ENCODE measurements at regions of chr11 and their contacts with region 1.

Region 1: DNA sequence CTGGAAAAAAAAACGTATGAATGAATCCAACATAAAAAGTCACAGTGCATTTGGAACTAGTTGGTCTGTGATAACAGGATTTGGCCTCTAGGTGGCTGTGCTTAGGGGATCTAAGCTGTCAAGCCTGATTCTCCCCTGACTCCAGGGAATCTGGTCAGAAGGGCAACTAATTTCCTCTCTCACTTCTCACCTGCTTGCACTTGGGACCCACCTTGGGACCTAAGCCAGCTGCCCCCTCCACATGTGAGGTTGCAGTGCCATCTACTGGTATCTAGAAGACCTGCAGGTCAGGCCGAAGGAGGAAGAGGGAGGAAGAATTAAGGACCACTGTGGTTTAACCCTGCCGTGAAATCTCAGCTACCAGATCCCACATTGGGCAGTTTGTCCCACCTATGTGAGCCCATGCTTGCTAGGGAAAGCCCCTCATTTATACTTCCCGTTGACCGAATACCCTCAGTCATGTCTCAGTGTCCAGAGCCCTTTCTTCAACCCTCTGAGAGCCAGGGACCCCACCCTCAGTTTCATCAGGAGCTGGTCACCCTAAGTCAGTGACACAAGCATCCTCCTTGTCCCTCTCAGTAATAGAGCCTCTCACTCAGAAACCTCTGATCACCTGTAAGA is 33.2 kb upstream of the CAVIN3 start:
- DNase-seq: peak; percentile 71
- H3K4me3 Mint-ChIP-seq: no peak overlapping the region
- H3K27ac Mint-ChIP-seq: no peak overlapping the region
- H3K4me1 Mint-ChIP-seq: peaks cover 11% of the 10 kb centered on the region
- H3K27me3 Mint-ChIP-seq: no peaks in the 10 kb centered on the region
- CTCF ChIP-seq: peak; percentile 96

Region 2: DNA sequence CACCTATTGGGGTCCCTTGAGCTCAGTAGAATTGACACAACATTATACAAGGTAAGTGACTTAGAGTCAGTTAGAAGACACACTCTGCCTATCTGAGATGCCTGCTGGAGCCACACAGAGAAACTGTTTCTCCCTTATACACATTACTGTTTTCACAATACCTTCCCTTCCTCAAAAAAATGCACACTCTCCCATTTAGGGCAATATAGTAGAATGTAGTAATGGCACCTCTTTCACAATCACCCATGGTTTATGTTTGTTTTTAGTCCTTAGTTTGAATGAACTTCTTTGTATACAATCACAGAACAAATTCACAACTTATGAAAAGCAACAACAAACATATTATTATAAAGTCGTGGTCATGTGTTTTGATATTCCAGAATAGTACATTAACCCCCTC is 819.4 kb before region 1 on chr11:
- CTCF ChIA-PET with region 1: no interaction called
- POLR2A ChIA-PET with region 1: no interaction called
- intact Hi-C with region 1: no loop called
- DNase-seq: no peak
- H3K4me3 Mint-ChIP-seq: no peak overlapping the region
- H3K27ac Mint-ChIP-seq: no peak overlapping the region
- H3K4me1 Mint-ChIP-seq: peaks cover 6% of the 10 kb centered on the region
- H3K27me3 Mint-ChIP-seq: peaks cover 24% of the 10 kb centered on the region
- CTCF ChIP-seq: no peak

Region 3: DNA sequence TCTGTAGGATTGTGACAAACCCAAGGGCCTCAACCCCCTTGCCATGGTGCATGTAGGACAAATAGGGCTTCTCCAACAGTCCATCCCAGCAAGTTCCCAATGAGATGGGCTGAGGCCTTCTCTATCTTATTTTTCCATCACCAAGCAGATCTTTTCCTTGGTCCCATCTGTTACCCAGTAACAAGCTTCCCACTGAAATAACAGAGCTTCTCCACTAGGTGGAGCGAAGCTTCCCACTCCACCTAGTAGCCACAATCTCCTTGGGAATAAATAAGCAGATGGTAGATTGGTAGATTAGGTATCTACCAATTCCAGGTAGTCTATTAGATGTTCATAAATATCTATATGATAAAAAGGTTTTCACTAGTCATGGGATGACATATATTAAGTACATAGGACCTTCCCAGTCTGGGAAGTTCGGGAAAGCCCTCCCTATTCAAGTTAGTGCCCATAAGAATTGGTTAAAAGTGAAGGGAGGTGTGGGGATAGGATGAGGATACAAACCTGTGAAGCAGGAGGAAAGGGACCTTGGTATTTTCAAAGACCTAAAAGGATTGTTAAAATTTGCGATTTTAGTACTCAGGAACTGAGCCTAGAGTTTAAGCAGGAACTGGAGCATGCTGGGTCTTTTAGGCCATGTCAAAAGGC is 360.7 kb before region 1 on chr11:
- CTCF ChIA-PET with region 1: interaction called, 16 read pairs
- POLR2A ChIA-PET with region 1: no interaction called
- intact Hi-C with region 1: no loop called
- DNase-seq: peak; percentile 32
- H3K4me3 Mint-ChIP-seq: no peak overlapping the region
- H3K27ac Mint-ChIP-seq: no peak overlapping the region
- H3K4me1 Mint-ChIP-seq: no peaks in the 10 kb centered on the region
- H3K27me3 Mint-ChIP-seq: no peaks in the 10 kb centered on the region
- CTCF ChIP-seq: peak; percentile 31

Region 4: GRCh38 chr11:6022956-6023355 is 330.5 kb before region 1 on chr11:
- CTCF ChIA-PET with region 1: interaction called, 66 read pairs
- POLR2A ChIA-PET with region 1: no interaction called
- intact Hi-C with region 1: loop called (anchors 1 kb)
- DNase-seq: peak; percentile 61
- H3K4me3 Mint-ChIP-seq: no peak overlapping the region
- H3K27ac Mint-ChIP-seq: no peak overlapping the region
- H3K4me1 Mint-ChIP-seq: no peaks in the 10 kb centered on the region
- H3K27me3 Mint-ChIP-seq: peaks cover 33% of the 10 kb centered on the region
- CTCF ChIP-seq: peak; percentile 56

Region 5: DNA sequence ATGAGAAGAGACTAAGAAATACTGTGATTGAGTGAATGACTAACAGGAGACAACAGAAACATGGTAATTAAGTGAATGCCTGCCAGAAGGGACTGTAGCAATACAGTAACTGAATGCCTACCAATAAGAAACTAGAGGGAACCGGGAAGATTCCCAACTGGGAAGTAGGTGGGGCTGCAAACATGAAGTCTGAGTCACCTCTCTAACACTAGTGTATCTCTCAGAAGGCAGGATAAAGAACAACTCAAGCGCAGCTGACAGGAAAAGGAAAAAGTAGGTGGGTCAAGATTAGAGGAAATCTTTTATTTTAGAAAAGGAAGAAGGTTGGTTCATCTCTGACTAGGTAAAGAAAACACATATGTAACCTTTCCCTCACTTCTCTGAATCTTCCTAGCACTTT is 134.1 kb before region 1 on chr11:
- CTCF ChIA-PET with region 1: interaction called, 24 read pairs
- POLR2A ChIA-PET with region 1: no interaction called
- intact Hi-C with region 1: no loop called
- DNase-seq: peak; percentile 95
- H3K4me3 Mint-ChIP-seq: no peak overlapping the region
- H3K27ac Mint-ChIP-seq: peak overlapping the region; percentile 57
- H3K4me1 Mint-ChIP-seq: peaks cover 13% of the 10 kb centered on the region
- H3K27me3 Mint-ChIP-seq: no peaks in the 10 kb centered on the region
- CTCF ChIP-seq: no peak

Region 6: GRCh38 chr11:6298605-6299004 is 54.9 kb before region 1 on chr11:
- CTCF ChIA-PET with region 1: interaction called, 27 read pairs
- POLR2A ChIA-PET with region 1: no interaction called
- intact Hi-C with region 1: loop called (anchors 1 kb)
- DNase-seq: peak; percentile 55
- H3K4me3 Mint-ChIP-seq: no peak overlapping the region
- H3K27ac Mint-ChIP-seq: no peak overlapping the region
- H3K4me1 Mint-ChIP-seq: no peaks in the 10 kb centered on the region
- H3K27me3 Mint-ChIP-seq: no peaks in the 10 kb centered on the region
- CTCF ChIP-seq: peak; percentile 54

Region 7: GRCh38 chr11:6315811-6316425 is 37.6 kb before region 1 on chr11:
- CTCF ChIA-PET with region 1: interaction called, 176 read pairs
- POLR2A ChIA-PET with region 1: interaction called, 7 read pairs
- intact Hi-C with region 1: loop called (anchors 1 kb)
- DNase-seq: peak; percentile 73
- H3K4me3 Mint-ChIP-seq: no peak overlapping the region
- H3K27ac Mint-ChIP-seq: no peak overlapping the region
- H3K4me1 Mint-ChIP-seq: peaks cover 18% of the 10 kb centered on the region
- H3K27me3 Mint-ChIP-seq: no peaks in the 10 kb centered on the region
- CTCF ChIP-seq: peak; percentile 80

Region 8: GRCh38 chr11:6333112-6333511 is 20.4 kb before region 1 on chr11:
- CTCF ChIA-PET with region 1: interaction called, 176 read pairs
- POLR2A ChIA-PET with region 1: no interaction called
- intact Hi-C with region 1: no loop called
- DNase-seq: no peak
- H3K4me3 Mint-ChIP-seq: no peak overlapping the region
- H3K27ac Mint-ChIP-seq: no peak overlapping the region
- H3K4me1 Mint-ChIP-seq: no peaks in the 10 kb centered on the region
- H3K27me3 Mint-ChIP-seq: no peaks in the 10 kb centered on the region
- CTCF ChIP-seq: no peak

Region 9: GRCh38 chr11:6817694-6818093 is 464.2 kb after region 1 on chr11:
- CTCF ChIA-PET with region 1: no interaction called
- POLR2A ChIA-PET with region 1: no interaction called
- intact Hi-C with region 1: no loop called
- DNase-seq: peak; percentile 23
- H3K4me3 Mint-ChIP-seq: no peak overlapping the region
- H3K27ac Mint-ChIP-seq: no peak overlapping the region
- H3K4me1 Mint-ChIP-seq: no peaks in the 10 kb centered on the region
- H3K27me3 Mint-ChIP-seq: peaks cover 11% of the 10 kb centered on the region
- CTCF ChIP-seq: no peak

Measured in MCF 10A (cell line).